Mammary epithelial cell (primary cell): ENCODE measurements at regions of chr2 and their contacts with region 1.

Region 1: DNA sequence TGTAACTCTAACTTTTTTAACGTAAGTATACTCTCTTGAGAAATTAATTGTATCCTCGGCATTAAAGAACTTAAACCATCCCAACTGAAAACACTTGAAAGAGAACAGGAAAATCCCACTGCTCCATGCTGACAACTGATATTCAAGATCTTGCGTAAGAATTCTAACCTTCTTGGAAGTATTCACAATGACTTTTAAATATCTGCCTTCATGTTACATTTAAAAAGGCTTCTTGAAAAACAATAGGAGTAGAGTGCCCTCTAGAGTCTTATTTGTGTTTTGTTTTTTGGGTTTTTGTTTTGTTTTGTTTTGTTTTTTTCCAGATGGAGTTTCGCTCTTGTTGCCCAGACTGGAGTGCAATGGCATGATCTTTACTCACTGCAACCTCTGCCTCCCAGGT is 65.4 kb upstream of the DNAJC10 start:
- DNase-seq: peak; percentile 34
- H3K4me3 ChIP-seq: no peak overlapping the region
- H3K27ac ChIP-seq: no peak overlapping the region
- H3K4me1 ChIP-seq: no peaks in the 10 kb centered on the region
- H3K27me3 ChIP-seq: no peaks in the 10 kb centered on the region
- CTCF ChIP-seq: peak; percentile 39 to 43

Region 2: DNA sequence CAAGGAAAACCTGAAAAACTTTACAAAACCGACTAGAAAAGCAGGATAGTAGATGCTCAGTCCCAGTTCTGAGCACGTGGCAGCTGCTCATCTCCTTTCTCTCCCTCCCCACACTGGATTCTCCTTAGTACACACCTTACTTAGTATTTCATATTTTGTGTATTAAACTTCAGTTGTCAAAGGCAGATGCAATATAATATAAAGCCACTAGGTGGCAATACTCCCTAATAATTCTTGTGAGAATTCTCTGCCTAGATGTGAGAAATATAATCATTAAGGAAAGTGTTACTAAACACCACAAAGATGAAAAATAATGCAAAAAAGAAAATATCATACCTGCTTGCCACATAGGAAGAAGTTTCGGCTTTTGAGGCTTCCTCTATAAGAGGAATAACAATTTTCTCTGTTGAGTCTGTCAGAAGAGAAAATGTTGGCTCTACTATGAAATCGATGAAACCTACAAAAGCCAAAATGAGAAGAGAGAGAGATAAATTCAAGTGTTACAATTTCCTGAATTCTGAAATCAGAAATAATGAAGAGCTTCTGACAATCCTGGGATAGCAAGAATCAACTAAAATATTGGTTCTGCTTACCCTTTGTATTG is 464.5 kb before region 1 on chr2:
- CTCF ChIA-PET with region 1: no interaction called
- dilution Hi-C with region 1: loop called (anchors 25 kb)
- in situ Hi-C with region 1: loop called (anchors 5 to 10 kb)
- intact Hi-C with region 1: loop called (anchors 1 kb)
- DNase-seq: peak; percentile 17
- H3K4me3 ChIP-seq: no peak overlapping the region
- H3K27ac ChIP-seq: no peak overlapping the region
- H3K4me1 ChIP-seq: no peaks in the 10 kb centered on the region
- H3K27me3 ChIP-seq: peaks cover 3% of the 10 kb centered on the region
- CTCF ChIP-seq: peak; percentile 61 to 64

Region 3: DNA sequence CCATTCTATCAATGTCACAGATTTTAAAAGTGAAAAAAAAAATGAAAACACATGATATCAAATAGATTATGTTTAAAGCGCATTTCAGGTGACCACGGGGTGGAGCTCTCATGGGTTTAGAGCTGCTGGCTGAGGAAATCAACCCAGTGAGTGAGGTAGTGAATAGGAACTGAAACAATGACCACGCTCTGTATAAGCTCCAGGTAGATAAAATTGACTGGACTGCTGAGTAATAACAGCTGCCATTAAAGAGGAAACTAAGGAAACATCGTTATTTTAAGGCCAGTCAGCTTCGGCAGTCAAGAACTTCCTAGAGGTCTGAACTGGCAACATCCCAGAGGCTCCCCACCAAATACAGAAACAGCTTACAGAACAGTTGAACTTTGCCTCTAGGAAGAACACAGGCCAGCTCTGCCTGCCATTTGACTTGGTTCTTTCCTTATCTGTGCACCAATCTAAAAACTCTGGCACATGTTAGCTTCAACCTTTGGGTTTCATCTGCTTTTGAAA is 409.8 kb before region 1 on chr2:
- CTCF ChIA-PET with region 1: interaction called, 6 read pairs
- dilution Hi-C with region 1: no loop called
- in situ Hi-C with region 1: no loop called
- intact Hi-C with region 1: loop called (anchors 1 kb)
- DNase-seq: peak; percentile 31
- H3K4me3 ChIP-seq: no peak overlapping the region
- H3K27ac ChIP-seq: no peak overlapping the region
- H3K4me1 ChIP-seq: no peaks in the 10 kb centered on the region
- H3K27me3 ChIP-seq: no peaks in the 10 kb centered on the region
- CTCF ChIP-seq: peak; percentile 47 to 58

Region 4: GRCh38 chr2:182301093-182301492 is 349.6 kb before region 1 on chr2:
- CTCF ChIA-PET with region 1: no interaction called
- dilution Hi-C with region 1: no loop called
- in situ Hi-C with region 1: no loop called
- intact Hi-C with region 1: loop called (anchors 2 kb)
- DNase-seq: no peak
- H3K4me3 ChIP-seq: no peak overlapping the region
- H3K27ac ChIP-seq: no peak overlapping the region
- H3K4me1 ChIP-seq: no peaks in the 10 kb centered on the region
- H3K27me3 ChIP-seq: no peaks in the 10 kb centered on the region
- CTCF ChIP-seq: peak in 1 of 2 donors; percentile 32

Region 5: GRCh38 chr2:183093857-183094657 is 443.4 kb after region 1 on chr2:
- CTCF ChIA-PET with region 1: no interaction called
- dilution Hi-C with region 1: no loop called
- in situ Hi-C with region 1: no loop called
- intact Hi-C with region 1: loop called (anchors 5 kb)
- DNase-seq: peak; percentile 8
- H3K4me3 ChIP-seq: no peak overlapping the region
- H3K27ac ChIP-seq: no peak overlapping the region
- H3K4me1 ChIP-seq: no peaks in the 10 kb centered on the region
- H3K27me3 ChIP-seq: no peaks in the 10 kb centered on the region
- CTCF ChIP-seq: no peak